CD14-positive monocyte (primary cell): ENCODE measurements at regions of chr1 and their contacts with region 1.

Region 1: DNA sequence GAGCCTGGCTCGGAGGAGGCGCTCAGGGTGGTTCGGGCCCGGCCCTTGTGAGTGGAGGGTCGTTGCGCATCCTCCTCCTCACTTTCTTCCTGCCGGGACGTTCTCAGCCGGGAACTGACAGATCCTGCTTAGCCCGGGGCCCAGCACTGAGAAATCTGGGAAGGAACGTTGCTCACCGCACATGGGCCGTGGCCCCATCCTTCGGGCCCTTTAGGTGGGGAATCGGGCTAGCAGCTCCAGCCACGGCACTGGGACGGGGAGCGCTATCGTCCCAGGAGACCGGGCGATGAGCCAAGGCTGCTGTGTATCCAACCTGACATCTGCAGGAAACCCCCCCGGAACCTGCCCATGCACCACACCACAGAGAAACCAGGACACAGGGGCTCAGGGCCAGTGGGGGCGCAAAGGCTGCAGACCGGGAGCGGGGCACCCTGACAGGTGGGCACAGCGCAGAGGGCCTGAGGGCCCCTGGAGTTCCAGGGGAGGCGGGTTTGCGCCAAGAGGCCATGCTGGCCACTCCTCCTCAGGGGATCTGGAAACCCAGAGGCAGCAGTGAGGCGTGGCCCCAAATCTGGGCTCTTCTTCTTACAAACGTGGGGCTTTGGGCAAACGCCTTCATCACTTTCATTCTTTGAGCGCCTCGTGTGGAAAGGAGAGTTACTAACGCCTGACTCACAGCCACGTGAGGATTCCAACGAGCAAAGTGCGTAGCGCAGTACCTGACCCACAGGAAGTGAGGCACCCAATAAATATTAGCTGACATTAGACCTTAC is at the start of gene SH2D5:
- DNase-seq: peak; percentile 91 to 97 (median 92)
- H3K4me3 ChIP-seq: peak within 1 kb of the TSS; percentile 40 to 77 (median 52)
- H3K4me3 Mint-ChIP-seq: peak within 1 kb of the TSS; percentile 82 to 96
- H3K27ac ChIP-seq: peak within 1 kb of the TSS in 1 of 2 donors; percentile 4
- H3K27ac Mint-ChIP-seq: peak within 1 kb of the TSS; percentile 33 to 89 (median 76)
- H3K4me1 ChIP-seq: peaks cover 19 to 25% of the 10 kb centered on the region in 2 donors
- H3K4me1 Mint-ChIP-seq: peaks cover 23% of the 10 kb centered on the region
- H3K27me3 ChIP-seq: peaks cover 26 to 55% of the 10 kb centered on the region in 2 donors
- H3K27me3 Mint-ChIP-seq: peaks cover 48 to 61% (median 57%) of the 10 kb centered on the region in 3 donors
- CTCF ChIP-seq: peak; percentile 33
- polyA plus RNA-seq, gene SH2D5: not detected

Region 2: GRCh38 chr1:20110679-20111078 is 622.1 kb before region 1 on chr1:
- intact Hi-C with region 1: no loop called
- DNase-seq: no peak
- H3K4me3 ChIP-seq: no peak overlapping the region
- H3K4me3 Mint-ChIP-seq: no peak overlapping the region
- H3K27ac ChIP-seq: no peak overlapping the region
- H3K27ac Mint-ChIP-seq: no peak overlapping the region
- H3K4me1 ChIP-seq: no peaks in the 10 kb centered on the region
- H3K4me1 Mint-ChIP-seq: no peaks in the 10 kb centered on the region
- H3K27me3 ChIP-seq: peaks cover 0 to 4% of the 10 kb centered on the region in 2 donors
- H3K27me3 Mint-ChIP-seq: peaks cover 11 to 14% (median 13%) of the 10 kb centered on the region in 3 donors
- CTCF ChIP-seq: no peak

Region 3: DNA sequence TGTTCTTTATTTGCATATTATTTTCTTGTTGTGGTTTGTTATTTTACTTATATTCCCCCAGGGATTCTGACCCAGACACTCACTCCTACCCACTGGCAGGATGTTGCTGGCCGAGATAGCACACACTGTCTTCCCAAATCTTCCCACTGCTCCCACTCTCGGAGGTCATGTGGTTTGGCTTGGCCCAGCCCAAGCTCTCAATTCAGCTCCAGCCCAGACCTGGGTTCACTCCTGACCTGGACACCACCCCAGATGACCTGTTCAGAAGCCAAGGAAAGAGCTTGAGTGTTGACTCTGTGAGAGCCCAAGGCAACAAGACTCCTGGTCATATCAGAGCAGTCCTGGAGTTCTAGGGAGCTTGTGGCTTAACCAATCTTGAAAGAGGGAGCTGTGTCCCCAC is 181.6 kb before region 1 on chr1:
- intact Hi-C with region 1: no loop called
- DNase-seq: no peak
- H3K4me3 ChIP-seq: no peak overlapping the region
- H3K4me3 Mint-ChIP-seq: peak overlapping the region in 1 of 2 donors; percentile 47
- H3K27ac ChIP-seq: no peak overlapping the region
- H3K27ac Mint-ChIP-seq: no peak overlapping the region
- H3K4me1 ChIP-seq: no peaks in the 10 kb centered on the region
- H3K4me1 Mint-ChIP-seq: peaks cover 5% of the 10 kb centered on the region
- H3K27me3 ChIP-seq: peaks cover 40 to 56% of the 10 kb centered on the region in 2 donors
- H3K27me3 Mint-ChIP-seq: peaks cover 56 to 66% (median 61%) of the 10 kb centered on the region in 3 donors
- CTCF ChIP-seq: no peak

Region 4: GRCh38 chr1:20786253-20787028 is 53.7 kb after region 1 on chr1:
- intact Hi-C with region 1: loop called in 1 of 2 experiments (anchors 5 kb)
- DNase-seq: peak; percentile 91 to 92 (median 91)
- H3K4me3 ChIP-seq: peak overlapping the region; percentile 79 to 99 (median 90)
- H3K4me3 Mint-ChIP-seq: peak overlapping the region; percentile 97 to 99
- H3K27ac ChIP-seq: peak overlapping the region; percentile 80 to 94
- H3K27ac Mint-ChIP-seq: peak overlapping the region; percentile 93 to 99 (median 96)
- H3K4me1 ChIP-seq: peaks cover 23 to 29% of the 10 kb centered on the region in 2 donors
- H3K4me1 Mint-ChIP-seq: peaks cover 31% of the 10 kb centered on the region
- H3K27me3 ChIP-seq: no peaks in the 10 kb centered on the region
- H3K27me3 Mint-ChIP-seq: peaks cover 0 to 3% (median 0%) of the 10 kb centered on the region in 3 donors
- CTCF ChIP-seq: no peak